Transverse colon (tissue), 4 donors: ENCODE measurements at regions of chr13 and their contacts with region 1.

Region 1: DNA sequence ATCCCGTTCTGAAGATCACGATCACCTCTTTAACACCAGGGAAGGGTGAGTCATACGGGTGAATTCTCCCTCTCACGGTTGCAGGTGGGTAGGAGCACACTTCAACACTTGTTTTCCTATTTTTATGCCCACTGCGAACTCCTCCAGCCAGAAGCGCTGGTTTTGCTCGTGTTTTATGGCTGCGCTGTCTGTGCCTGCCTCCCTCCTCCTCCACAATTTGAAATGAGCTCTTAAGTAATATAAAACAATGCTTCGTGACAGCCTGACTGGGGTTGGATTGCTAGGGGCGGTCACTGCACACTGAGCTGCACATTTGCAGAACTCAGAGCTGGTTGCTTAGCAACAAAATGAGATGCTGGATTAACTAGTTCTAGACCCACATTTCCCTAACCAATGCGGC is 12.9 kb downstream of the CCDC70 start:
- DNase-seq: no peak
- H3K4me3 ChIP-seq: no peak overlapping the region
- H3K27ac ChIP-seq: no peak overlapping the region
- H3K4me1 ChIP-seq: no peaks in the 10 kb centered on the region
- H3K27me3 ChIP-seq: no peaks in the 10 kb centered on the region
- CTCF ChIP-seq: no peak
- EP300 ChIP-seq: no peak
- POLR2A ChIP-seq: no peak

Region 2: DNA sequence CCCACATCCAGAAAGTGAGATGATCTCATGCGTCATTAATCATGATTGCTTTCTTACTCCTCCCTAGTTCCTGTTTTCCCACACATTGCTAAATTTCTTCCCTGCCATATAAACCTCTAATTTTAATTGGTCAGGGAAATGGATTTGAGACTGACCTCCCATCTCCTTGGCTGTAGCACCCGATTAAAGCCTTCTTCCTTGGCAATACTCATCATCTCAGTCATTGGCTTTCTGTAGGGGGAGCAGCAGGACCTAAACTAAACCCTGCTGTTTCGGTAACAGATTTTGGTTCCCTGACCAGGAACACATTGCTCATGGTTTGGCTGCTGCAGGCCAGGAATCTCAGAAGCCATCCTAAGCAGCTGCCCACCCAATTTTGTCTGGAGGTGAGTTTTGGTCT is 2000.2 kb before region 1 on chr13:
- in situ Hi-C with region 1: no loop called
- intact Hi-C with region 1: loop called (anchors 5 kb)
- DNase-seq: no peak
- H3K4me3 ChIP-seq: no peak overlapping the region
- H3K27ac ChIP-seq: no peak overlapping the region
- H3K4me1 ChIP-seq: no peaks in the 10 kb centered on the region
- H3K27me3 ChIP-seq: no peaks in the 10 kb centered on the region
- CTCF ChIP-seq: no peak
- EP300 ChIP-seq: no peak
- POLR2A ChIP-seq: no peak